ENCODE measurements at regions of chr11 and their contacts with region 1.

Region 1: GRCh38 chr11:32326522-32326921 is 108.8 kb downstream of the WT1 start:
- DNase-seq: no peak
- H3K4me3 ChIP-seq: no peak overlapping the region
- H3K4me3 Mint-ChIP-seq: no peak overlapping the region
- H3K27ac ChIP-seq: no peak overlapping the region
- H3K27ac Mint-ChIP-seq: no peak overlapping the region
- H3K4me1 ChIP-seq: no peaks in the 10 kb centered on the region
- H3K4me1 Mint-ChIP-seq: peaks cover 0 to 2% (median under 1%) of the 10 kb centered on the region in 4 donors
- H3K27me3 ChIP-seq: no peaks in the 10 kb centered on the region
- H3K27me3 Mint-ChIP-seq: peaks cover 12 to 14% of the 10 kb centered on the region in 2 donors

Region 2: DNA sequence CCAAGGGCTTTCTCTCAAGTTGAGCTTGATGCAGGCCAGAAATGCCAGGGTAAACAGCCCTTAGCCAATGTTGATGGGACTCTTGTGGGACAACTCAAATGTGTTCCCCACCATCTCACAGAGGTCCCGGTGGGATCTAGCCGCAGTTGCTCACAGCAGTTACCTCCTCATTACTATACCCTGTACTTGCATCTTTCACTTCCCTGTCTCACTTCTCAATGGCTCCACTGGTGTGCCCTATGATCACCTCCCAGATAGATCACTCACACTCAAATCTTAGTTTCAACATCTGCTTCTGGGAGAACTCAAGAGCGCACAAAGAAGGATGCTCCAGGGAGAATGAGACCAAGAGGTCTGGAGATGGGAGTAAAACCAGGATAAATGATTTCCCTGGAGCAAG is 188.7 kb before region 1 on chr11:
- CTCF ChIA-PET with region 1: no interaction called
- POLR2A ChIA-PET with region 1: no interaction called
- intact Hi-C with region 1: no loop called
- DNase-seq: no peak
- H3K4me3 ChIP-seq: no peak overlapping the region
- H3K4me3 Mint-ChIP-seq: no peak overlapping the region
- H3K27ac ChIP-seq: no peak overlapping the region
- H3K27ac Mint-ChIP-seq: no peak overlapping the region
- H3K4me1 ChIP-seq: no peaks in the 10 kb centered on the region
- H3K4me1 Mint-ChIP-seq: peaks cover 0 to 6% (median 0%) of the 10 kb centered on the region in 4 donors
- H3K27me3 ChIP-seq: no peaks in the 10 kb centered on the region
- H3K27me3 Mint-ChIP-seq: peaks cover 2 to 13% of the 10 kb centered on the region in 2 donors

Region 3: GRCh38 chr11:32302821-32303220 is 23.7 kb before region 1 on chr11:
- CTCF ChIA-PET with region 1: interaction called, 19 read pairs
- POLR2A ChIA-PET with region 1: no interaction called
- intact Hi-C with region 1: no loop called
- DNase-seq: no peak
- H3K4me3 ChIP-seq: no peak overlapping the region
- H3K4me3 Mint-ChIP-seq: no peak overlapping the region
- H3K27ac ChIP-seq: no peak overlapping the region
- H3K27ac Mint-ChIP-seq: no peak overlapping the region
- H3K4me1 ChIP-seq: no peaks in the 10 kb centered on the region
- H3K4me1 Mint-ChIP-seq: no peaks in the 10 kb centered on the region
- H3K27me3 ChIP-seq: no peaks in the 10 kb centered on the region
- H3K27me3 Mint-ChIP-seq: peaks cover 0 to 4% of the 10 kb centered on the region in 2 donors

Region 4: GRCh38 chr11:32312865-32313403 is 13.6 kb before region 1 on chr11:
- CTCF ChIA-PET with region 1: interaction called, 16 read pairs
- POLR2A ChIA-PET with region 1: no interaction called
- intact Hi-C with region 1: no loop called
- DNase-seq: peak in 1 of 5 donors; percentile 7
- H3K4me3 ChIP-seq: no peak overlapping the region
- H3K4me3 Mint-ChIP-seq: no peak overlapping the region
- H3K27ac ChIP-seq: no peak overlapping the region
- H3K27ac Mint-ChIP-seq: no peak overlapping the region
- H3K4me1 ChIP-seq: no peaks in the 10 kb centered on the region
- H3K4me1 Mint-ChIP-seq: peaks cover 0 to 7% (median 5%) of the 10 kb centered on the region in 4 donors
- H3K27me3 ChIP-seq: no peaks in the 10 kb centered on the region
- H3K27me3 Mint-ChIP-seq: peaks cover 2 to 7% of the 10 kb centered on the region in 2 donors

Region 5: DNA sequence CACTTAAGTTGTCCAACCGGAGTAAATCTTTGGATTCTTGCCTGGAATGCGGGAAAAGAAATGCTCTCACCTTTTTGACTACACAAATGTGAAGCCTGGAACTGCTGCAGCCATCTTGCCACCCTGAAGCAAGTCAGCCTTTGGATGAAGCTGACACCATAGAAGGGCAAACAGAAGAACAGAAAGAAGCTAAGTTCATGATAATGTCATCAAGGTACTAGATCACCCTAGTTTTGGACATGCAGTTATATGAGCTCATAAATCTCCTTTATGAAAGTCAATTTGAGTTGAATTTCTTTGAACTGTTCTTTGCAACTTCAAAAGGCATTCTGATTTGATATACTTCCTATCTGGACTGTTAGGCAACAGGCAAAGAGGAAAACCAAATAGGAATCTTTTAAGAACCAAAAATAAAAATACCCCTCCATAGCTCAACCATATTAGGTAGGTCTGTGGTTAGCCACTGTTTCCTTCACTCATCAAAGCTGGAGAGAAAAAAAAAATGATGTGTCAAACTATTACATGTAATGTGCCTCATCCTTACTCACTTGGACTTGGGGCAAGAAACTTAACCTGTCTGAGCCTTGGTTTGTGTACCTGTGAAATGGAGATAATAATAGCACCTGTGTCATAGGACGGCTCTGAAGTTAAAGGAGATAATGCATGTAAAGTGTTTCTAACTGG is 16.9 kb after region 1 on chr11:
- CTCF ChIA-PET with region 1: interaction called, 19 read pairs
- POLR2A ChIA-PET with region 1: no interaction called
- intact Hi-C with region 1: no loop called
- DNase-seq: peak in 4 of 5 donors; percentile 12 to 25 (median 21)
- H3K4me3 ChIP-seq: no peak overlapping the region
- H3K4me3 Mint-ChIP-seq: peak overlapping the region in 1 of 8 donors; percentile 31
- H3K27ac ChIP-seq: no peak overlapping the region
- H3K27ac Mint-ChIP-seq: peak overlapping the region in 1 of 7 donors; percentile 24
- H3K4me1 ChIP-seq: peaks cover 9% of the 10 kb centered on the region
- H3K4me1 Mint-ChIP-seq: peaks cover 10 to 11% (median 10%) of the 10 kb centered on the region in 4 donors
- H3K27me3 ChIP-seq: no peaks in the 10 kb centered on the region
- H3K27me3 Mint-ChIP-seq: peaks cover 0 to 5% of the 10 kb centered on the region in 2 donors

Region 6: GRCh38 chr11:32615422-32615821 is 288.9 kb after region 1 on chr11:
- CTCF ChIA-PET with region 1: interaction called, 10 read pairs
- POLR2A ChIA-PET with region 1: no interaction called
- intact Hi-C with region 1: loop called (anchors 10 kb)
- DNase-seq: peak in 1 of 5 donors; percentile 2
- H3K4me3 ChIP-seq: no peak overlapping the region
- H3K4me3 Mint-ChIP-seq: no peak overlapping the region
- H3K27ac ChIP-seq: no peak overlapping the region
- H3K27ac Mint-ChIP-seq: no peak overlapping the region
- H3K4me1 ChIP-seq: no peaks in the 10 kb centered on the region
- H3K4me1 Mint-ChIP-seq: no peaks in the 10 kb centered on the region
- H3K27me3 ChIP-seq: no peaks in the 10 kb centered on the region
- H3K27me3 Mint-ChIP-seq: peaks cover 3 to 4% of the 10 kb centered on the region in 2 donors